ENCODE measurements at regions of chr13 and their contacts with region 1.

Region 1: DNA sequence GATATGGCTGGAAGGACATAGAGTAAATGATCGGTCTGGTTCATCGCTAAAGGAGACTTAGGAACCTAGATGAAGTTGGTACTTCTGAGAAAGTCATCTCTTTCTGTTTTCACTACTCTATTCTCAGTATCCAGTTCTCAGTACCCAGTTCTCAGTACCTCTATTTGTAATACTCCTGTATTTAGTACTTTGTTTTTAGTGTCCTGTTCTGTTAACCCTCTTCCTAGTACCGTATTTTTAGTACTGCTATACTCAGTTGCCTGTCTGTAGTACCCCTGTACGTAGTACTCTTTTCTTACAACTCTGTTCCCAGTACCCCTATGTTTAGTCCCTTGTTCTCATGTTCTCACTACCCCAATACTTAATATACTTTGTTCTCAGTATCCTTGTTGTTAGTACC is 1.2 kb downstream of the RFXAP start:
- DNase-seq: no peak
- ATAC-seq: no peak
- H3K4me3 ChIP-seq: peak overlapping the region; percentile 85 to 94
- H3K4me3 Mint-ChIP-seq: peak overlapping the region; percentile 88 to 95 (median 89)
- H3K27ac ChIP-seq: no peak overlapping the region
- H3K27ac Mint-ChIP-seq: peak overlapping the region; percentile 81 to 83
- H3K4me1 ChIP-seq: peaks cover 13 to 25% of the 10 kb centered on the region in 2 experiments
- H3K4me1 Mint-ChIP-seq: peaks cover 58 to 63% (median 59%) of the 10 kb centered on the region in 3 donors
- H3K27me3 ChIP-seq: no peaks in the 10 kb centered on the region
- H3K27me3 Mint-ChIP-seq: no peaks in the 10 kb centered on the region

Region 2: GRCh38 chr13:36571444-36571843 is 248.8 kb before region 1 on chr13:
- CTCF ChIA-PET with region 1: no interaction called
- POLR2A ChIA-PET with region 1: interaction called in 1 of 2 experiments, 11 read pairs
- DNase-seq: no peak
- ATAC-seq: no peak
- H3K4me3 ChIP-seq: no peak overlapping the region
- H3K4me3 Mint-ChIP-seq: no peak overlapping the region
- H3K27ac ChIP-seq: no peak overlapping the region
- H3K27ac Mint-ChIP-seq: no peak overlapping the region
- H3K4me1 ChIP-seq: no peaks in the 10 kb centered on the region
- H3K4me1 Mint-ChIP-seq: no peaks in the 10 kb centered on the region
- H3K27me3 ChIP-seq: peaks cover 0 to 3% of the 10 kb centered on the region in 2 experiments
- H3K27me3 Mint-ChIP-seq: no peaks in the 10 kb centered on the region

Region 3: GRCh38 chr13:36788276-36788675 is 31.9 kb before region 1 on chr13:
- CTCF ChIA-PET with region 1: no interaction called
- POLR2A ChIA-PET with region 1: no interaction called
- DNase-seq: no peak
- ATAC-seq: no peak
- H3K4me3 ChIP-seq: no peak overlapping the region
- H3K4me3 Mint-ChIP-seq: no peak overlapping the region
- H3K27ac ChIP-seq: no peak overlapping the region
- H3K27ac Mint-ChIP-seq: no peak overlapping the region
- H3K4me1 ChIP-seq: no peaks in the 10 kb centered on the region
- H3K4me1 Mint-ChIP-seq: no peaks in the 10 kb centered on the region
- H3K27me3 ChIP-seq: peaks cover 0 to 7% of the 10 kb centered on the region in 2 experiments
- H3K27me3 Mint-ChIP-seq: peaks cover 18 to 31% of the 10 kb centered on the region in 2 donors

Measured in T-cell (primary cell).